ENCODE measurements at regions of chr16 and their contacts with region 1.

Region 1: DNA sequence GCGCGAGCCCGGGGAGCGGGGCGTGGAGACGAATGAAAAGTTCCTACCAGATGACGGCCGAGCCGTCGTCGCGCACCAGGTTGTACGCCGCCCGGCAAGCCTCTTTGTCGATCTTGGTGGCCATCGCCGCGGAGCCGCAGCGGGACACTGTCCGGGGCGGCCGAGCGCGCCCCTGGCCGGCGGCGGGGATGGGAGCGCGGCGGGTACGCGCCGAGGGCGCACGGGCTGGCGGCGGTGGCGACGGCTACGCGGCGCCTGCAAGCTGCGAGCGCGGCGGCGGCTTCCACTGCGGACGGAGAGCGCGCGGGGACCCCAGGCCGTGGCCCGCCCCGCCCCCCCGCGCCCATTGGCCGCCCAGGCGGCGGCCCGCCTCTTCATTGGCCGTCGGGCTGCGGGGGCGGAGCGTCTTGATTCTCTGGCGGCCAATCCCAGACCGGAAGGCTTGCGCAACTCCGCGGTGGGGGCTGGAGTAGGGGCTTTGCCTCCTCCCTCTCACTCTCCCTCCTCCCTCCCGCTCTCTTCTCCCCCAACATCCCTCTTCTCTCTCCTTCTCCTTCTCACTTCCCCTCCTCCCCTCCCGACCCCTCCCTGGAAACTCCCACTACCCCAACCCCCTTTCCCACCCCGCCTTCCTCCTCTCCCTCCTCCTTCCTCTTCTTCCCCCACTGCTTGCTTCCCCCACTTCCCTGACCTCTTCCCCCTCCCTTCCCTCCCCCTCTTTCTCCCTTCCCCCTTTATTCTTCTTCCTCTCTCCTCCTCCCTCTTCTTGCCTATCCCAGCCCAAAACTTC is at the start of gene COTL1:
- DNase-seq: peak; percentile 95
- H3K4me3 ChIP-seq: peak within 1 kb of the TSS; percentile 66 to 67
- H3K27ac ChIP-seq: peak within 1 kb of the TSS; percentile 52 to 61
- H3K4me1 ChIP-seq: peaks cover 9% of the 10 kb centered on the region
- H3K27me3 ChIP-seq: no peaks in the 10 kb centered on the region
- CTCF ChIP-seq: peak in 1 of 4 experiments; percentile 5
- POLR2A ChIP-seq: peak; percentile 61
- total RNA-seq, gene COTL1: 46.8 to 110 TPM

Region 2: GRCh38 chr16:84511180-84511824 is 106.7 kb before region 1 on chr16:
- intact Hi-C with region 1: loop called (anchors 1 kb)
- DNase-seq: peak; percentile 75
- H3K4me3 ChIP-seq: no peak overlapping the region
- H3K27ac ChIP-seq: no peak overlapping the region
- H3K4me1 ChIP-seq: no peaks in the 10 kb centered on the region
- H3K27me3 ChIP-seq: no peaks in the 10 kb centered on the region
- CTCF ChIP-seq: peak; percentile 89 to 99 (median 96)
- POLR2A ChIP-seq: no peak

Region 3: DNA sequence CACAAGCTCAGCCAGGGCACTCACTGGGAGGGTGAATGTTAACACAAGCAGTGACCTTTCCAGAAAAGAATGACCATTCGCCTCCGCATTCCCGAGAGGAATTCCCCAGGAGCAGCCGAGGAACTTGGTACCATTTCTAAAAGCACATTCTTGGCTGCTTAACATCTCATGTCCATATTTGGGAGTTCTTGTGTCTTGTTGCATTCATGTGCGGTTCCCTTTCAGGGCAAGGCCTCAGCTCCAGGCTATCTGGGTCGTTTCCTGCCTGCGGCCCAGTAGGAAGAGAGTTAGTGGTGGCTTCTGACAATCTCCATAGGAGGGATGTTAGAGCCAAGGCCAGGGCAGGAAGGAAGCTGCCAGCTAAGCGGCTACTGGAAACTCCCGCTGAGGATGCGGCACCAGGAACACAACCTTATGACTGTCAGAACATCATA is 85.7 kb before region 1 on chr16:
- intact Hi-C with region 1: loop called (anchors 5 kb)
- DNase-seq: peak; percentile 35
- H3K4me3 ChIP-seq: no peak overlapping the region
- H3K27ac ChIP-seq: peak overlapping the region; percentile 59
- H3K4me1 ChIP-seq: peaks cover 7% of the 10 kb centered on the region
- H3K27me3 ChIP-seq: no peaks in the 10 kb centered on the region
- CTCF ChIP-seq: no peak
- POLR2A ChIP-seq: no peak

Region 4: DNA sequence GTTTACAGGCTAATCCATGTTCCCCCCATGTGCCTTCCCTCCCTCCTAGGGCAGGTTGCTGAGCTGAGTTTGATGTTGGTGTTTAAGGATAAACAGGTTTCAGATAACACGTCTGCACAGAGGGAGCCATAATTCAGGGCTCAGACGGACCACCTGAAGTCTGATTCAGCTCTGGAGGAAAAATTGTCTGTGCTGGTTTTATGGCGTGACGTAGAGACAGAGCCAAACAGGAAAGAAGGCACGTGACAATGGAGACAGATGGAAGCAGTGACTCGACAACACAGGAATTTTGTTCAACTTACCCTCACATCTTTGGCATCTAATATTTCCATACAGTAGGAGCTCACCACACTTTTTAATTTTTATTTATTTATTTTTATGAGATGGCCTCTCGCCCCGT is 71.1 kb after region 1 on chr16:
- intact Hi-C with region 1: no loop called
- DNase-seq: no peak
- H3K4me3 ChIP-seq: no peak overlapping the region
- H3K27ac ChIP-seq: no peak overlapping the region
- H3K4me1 ChIP-seq: no peaks in the 10 kb centered on the region
- H3K27me3 ChIP-seq: no peaks in the 10 kb centered on the region
- CTCF ChIP-seq: no peak
- POLR2A ChIP-seq: no peak

Region 5: DNA sequence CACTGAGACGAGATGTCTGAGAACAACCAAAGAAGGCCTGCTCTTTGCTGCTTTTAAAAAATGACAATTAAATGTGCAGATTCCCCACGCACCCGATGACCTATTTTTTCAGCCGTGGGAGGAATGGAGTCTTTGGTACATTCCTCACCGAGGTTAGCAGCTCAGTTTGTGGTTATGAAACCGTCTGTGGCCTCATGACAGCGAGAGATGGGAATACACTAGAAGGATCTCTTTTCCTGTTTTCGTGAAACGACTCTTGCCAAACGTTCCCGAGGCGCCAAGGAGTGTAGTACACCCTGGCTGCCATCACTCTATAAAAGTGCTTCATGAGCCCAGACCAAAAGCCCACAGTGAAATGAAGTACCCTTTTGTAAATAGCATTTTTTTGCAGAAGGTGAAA is 289.6 kb after region 1 on chr16:
- intact Hi-C with region 1: no loop called
- DNase-seq: no peak
- H3K4me3 ChIP-seq: no peak overlapping the region
- H3K27ac ChIP-seq: peak overlapping the region; percentile 33 to 42
- H3K4me1 ChIP-seq: no peaks in the 10 kb centered on the region
- H3K27me3 ChIP-seq: no peaks in the 10 kb centered on the region
- CTCF ChIP-seq: peak in 1 of 4 experiments; percentile 10
- POLR2A ChIP-seq: no peak